GM12878 (cell line): ENCODE measurements at regions of chr11 and their contacts with region 1.

Region 1: GRCh38 chr11:96324960-96325359 is 18.0 kb downstream of the MAML2 start:
- DNase-seq: no peak
- ATAC-seq: no peak
- H3K4me3 ChIP-seq: no peak overlapping the region
- H3K27ac ChIP-seq: no peak overlapping the region
- H3K4me1 ChIP-seq: no peaks in the 10 kb centered on the region
- H3K27me3 ChIP-seq: no peaks in the 10 kb centered on the region
- CTCF ChIP-seq: no peak
- EP300 ChIP-seq: no peak
- POLR2A ChIP-seq: no peak
- RAD21 ChIP-seq: no peak

Region 2: DNA sequence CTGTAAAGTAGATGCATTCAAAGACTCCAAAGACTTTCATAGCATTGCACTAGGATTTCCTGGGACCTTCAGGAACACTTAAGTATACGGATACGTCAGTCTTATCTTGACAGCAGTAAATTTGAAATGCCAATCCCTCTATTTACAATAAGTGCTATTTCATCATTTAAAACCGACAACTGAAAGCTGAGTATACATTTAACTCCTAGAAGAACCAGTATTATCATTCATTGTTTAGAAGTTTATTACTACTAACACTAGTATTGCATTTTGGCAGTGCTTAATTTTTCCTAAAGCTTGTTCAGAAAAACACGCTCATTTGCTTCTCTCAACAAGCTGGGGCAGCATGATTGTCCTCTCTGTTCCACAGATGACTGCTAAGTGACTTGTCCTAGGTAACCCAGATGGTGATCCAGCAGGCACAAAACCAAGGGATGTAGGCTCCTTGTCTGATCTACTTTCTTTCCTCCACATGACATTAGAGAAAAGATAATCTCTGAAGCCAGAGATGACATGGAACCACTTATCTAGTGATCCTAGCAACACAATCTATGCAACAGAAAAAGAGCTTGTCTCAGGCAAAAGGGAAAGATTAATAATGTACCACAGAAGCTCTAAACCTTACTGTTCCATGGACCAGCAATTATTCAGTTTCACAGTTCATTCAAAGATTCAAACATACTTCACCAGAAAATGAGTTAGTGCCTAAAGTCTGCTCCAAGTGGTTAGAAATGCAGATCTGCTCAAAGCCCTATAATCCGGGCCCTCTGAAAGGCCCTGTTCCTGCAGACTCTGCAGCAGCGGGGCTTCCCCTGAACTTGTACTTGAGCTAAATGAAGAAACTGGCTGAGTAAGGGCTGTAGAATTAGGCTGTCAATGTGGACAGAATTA is 12.8 kb after region 1 on chr11:
- CTCF ChIA-PET with region 1: interaction called, 26 read pairs
- POLR2A ChIA-PET with region 1: interaction called, 3 read pairs
- RAD21 ChIA-PET with region 1: interaction called, 5 read pairs
- SMC1A ChIA-PET with region 1: interaction called, 17 read pairs
- in situ Hi-C with region 1: no loop called
- intact Hi-C with region 1: no loop called
- DNase-seq: no peak
- ATAC-seq: peak; percentile 52
- H3K4me3 ChIP-seq: peak overlapping the region; percentile 100
- H3K27ac ChIP-seq: peak overlapping the region; percentile 80
- H3K4me1 ChIP-seq: peaks cover 4% of the 10 kb centered on the region
- H3K27me3 ChIP-seq: no peaks in the 10 kb centered on the region
- CTCF ChIP-seq: no peak
- EP300 ChIP-seq: no peak
- POLR2A ChIP-seq: no peak
- RAD21 ChIP-seq: no peak